ENCODE measurements at regions of chr7 and their contacts with region 1.

Region 1: DNA sequence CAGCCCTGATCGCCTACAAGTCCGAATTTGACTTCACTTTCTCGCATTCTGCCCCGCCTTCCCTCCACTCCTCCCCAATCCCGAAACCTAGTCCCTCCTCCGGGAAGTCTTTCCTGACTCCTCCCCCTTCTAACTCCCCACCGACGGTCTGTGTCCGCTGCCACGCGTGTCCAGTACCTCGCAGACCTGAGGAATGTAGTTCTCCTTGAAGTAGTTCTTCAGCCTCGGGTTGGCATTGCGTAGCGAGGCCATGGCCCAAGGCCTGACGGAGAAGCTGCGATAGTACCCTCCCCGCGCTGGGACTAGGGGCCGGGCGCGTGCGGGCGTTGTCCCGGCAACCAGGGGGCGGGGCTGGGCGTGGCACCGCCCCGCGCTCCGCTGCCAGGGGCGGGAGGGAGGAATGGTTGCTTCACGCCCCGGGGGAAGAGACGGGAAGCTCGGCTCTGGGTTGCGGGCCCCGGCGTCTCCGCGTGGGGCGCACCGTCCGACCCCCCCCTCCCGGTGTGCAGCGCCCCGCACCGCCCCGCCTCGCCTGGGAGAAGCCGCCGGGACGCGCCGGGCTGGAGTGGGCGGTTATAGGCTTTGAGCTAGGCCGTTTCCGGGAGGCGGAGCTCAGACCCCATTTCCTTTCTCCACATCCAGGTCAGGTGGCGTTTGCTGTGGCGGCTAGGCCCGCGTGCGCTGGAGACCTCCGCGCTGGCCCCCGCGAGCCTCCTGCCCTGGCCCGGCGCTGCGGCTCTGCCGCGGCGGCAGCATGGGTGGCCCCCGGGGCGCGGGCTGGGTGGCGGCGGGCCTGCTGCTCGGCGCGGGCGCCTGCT is at the starts of genes ARMC10 and FBXL13:
- DNase-seq: peak; percentile 80 to 96 (median 92)

Region 2: GRCh38 chr7:103148994-103149807 is 74.5 kb after region 1 on chr7 and contains the start of gene NAPEPLD:
- intact Hi-C with region 1: loop called (anchors 10 kb)
- DNase-seq: peak; percentile 79 to 96 (median 91)

Measured in head of caudate nucleus (tissue), 42 donors.